Activated B cell treated with CpG ODN at 0.5 μM for 24 hours (primary cell): ENCODE measurements at regions of chr2 and their contacts with region 1.

Region 1: GRCh38 chr2:190534310-190535120 is at the start of gene NEMP2:
- DNase-seq: peak; percentile 90
- ATAC-seq: peak; percentile 80
- H3K4me3 Mint-ChIP-seq: peak within 1 kb of the TSS; percentile 97
- H3K27ac Mint-ChIP-seq: peak within 1 kb of the TSS; percentile 100
- H3K4me1 Mint-ChIP-seq: peaks cover 56% of the 10 kb centered on the region
- H3K27me3 Mint-ChIP-seq: no peaks in the 10 kb centered on the region
- CTCF ChIP-seq: no peak
- total RNA-seq, gene NEMP2: 14.2 and 15.6 TPM in 2 replicates

Region 2: DNA sequence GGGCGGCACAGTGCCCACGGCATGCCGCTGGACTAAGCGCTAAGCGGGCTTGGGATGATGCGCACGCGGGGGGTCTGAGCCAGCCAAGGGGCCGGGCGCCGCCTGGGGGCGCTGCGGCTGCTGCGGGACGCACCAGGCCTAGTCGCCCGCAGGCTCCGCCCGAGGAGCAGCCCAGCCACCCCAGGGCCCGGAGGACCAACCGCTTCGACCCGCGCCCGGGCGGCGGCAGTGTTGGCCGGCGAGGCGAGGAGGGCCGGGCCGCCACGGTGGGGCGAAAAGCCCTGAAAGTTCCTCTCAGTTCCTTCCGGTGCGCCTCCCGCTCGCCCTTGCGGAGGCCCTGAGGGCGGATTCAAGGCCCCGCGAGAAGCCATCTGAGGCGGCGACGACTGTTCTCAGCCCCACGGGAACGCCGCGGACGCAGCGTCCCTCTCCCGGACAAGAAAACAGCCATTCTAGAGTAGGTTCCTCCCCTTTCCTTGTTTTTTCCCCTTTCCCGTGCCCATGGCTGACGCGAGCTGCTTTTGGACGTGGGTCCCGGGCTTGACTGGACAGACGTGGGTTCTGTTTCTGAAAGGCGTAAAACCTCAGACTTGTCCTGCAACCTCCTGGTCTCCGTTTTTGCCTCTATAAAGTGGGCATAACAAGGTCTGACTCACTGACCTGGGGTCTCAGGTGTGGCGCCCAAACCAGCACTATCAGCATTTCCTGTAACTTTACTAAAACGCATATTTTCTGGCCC is 860.0 kb before region 1 on chr2 and contains the start of gene ANKAR:
- CTCF ChIA-PET with region 1: no interaction called
- POLR2A ChIA-PET with region 1: no interaction called
- intact Hi-C with region 1: loop called (anchors 5 kb)
- DNase-seq: peak; percentile 89
- ATAC-seq: peak; percentile 97
- H3K4me3 Mint-ChIP-seq: peak within 1 kb of the TSS; percentile 96
- H3K27ac Mint-ChIP-seq: peak within 1 kb of the TSS; percentile 99
- H3K4me1 Mint-ChIP-seq: peaks cover 38% of the 10 kb centered on the region
- H3K27me3 Mint-ChIP-seq: no peaks in the 10 kb centered on the region
- CTCF ChIP-seq: peak; percentile 67
- total RNA-seq, gene ANKAR: 13.1 and 14.5 TPM in 2 replicates

Region 3: GRCh38 chr2:189783927-189784867 is 750.3 kb before region 1 on chr2 and contains the starts of genes ORMDL1 and PMS1:
- CTCF ChIA-PET with region 1: no interaction called
- POLR2A ChIA-PET with region 1: no interaction called
- intact Hi-C with region 1: loop called (anchors 1 kb)
- DNase-seq: peak; percentile 95
- ATAC-seq: peak; percentile 90
- H3K4me3 Mint-ChIP-seq: peak within 1 kb of the TSS; percentile 94
- H3K27ac Mint-ChIP-seq: peak within 1 kb of the TSS; percentile 96
- H3K4me1 Mint-ChIP-seq: peaks cover 45% of the 10 kb centered on the region
- H3K27me3 Mint-ChIP-seq: no peaks in the 10 kb centered on the region
- CTCF ChIP-seq: no peak
- total RNA-seq, gene ORMDL1: 80.5 and 92.6 TPM in 2 replicates
- total RNA-seq, gene PMS1: 32.7 and 39.0 TPM in 2 replicates

Region 4: DNA sequence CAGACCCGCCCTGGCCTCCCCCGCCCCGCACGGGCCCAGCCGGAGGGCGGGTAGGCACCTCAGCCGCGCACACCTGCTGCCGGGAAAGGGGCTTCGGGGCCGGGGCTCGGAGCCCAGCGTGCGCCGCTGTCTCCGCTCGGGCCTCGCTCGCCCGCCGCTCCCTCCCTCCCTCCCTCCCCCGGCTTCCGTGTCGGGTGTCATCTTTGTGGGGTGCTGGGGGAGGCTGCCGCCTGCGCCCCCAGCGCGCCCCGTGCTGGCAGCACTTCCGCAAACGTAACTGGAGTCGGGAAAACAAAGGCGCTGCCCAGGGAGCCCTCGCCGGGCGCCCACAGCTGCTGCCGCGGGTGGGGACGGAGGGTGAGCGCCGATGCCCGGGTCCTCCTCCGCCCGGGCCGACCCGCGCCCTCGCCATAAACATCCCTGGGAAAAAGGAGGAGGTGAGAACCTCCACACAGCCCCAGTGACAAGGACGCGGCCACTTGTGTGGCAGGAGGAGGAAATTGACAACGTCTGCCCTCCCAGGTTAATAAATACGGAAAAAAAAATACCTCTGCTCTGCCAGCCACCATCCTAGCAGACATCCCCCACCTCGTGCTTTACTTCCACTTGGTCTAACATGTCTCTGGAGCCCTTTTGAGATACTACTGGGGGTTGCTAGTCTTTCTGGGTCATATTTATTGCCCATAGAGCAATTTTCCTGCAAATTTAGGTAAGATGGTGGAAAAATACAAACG is 125.8 kb before region 1 on chr2:
- CTCF ChIA-PET with region 1: no interaction called
- POLR2A ChIA-PET with region 1: interaction called, 6 read pairs
- intact Hi-C with region 1: loop called (anchors 1 kb)
- DNase-seq: no peak
- ATAC-seq: peak; percentile 55
- H3K4me3 Mint-ChIP-seq: peak overlapping the region; percentile 84
- H3K27ac Mint-ChIP-seq: peak overlapping the region; percentile 86
- H3K4me1 Mint-ChIP-seq: peaks cover 26% of the 10 kb centered on the region
- H3K27me3 Mint-ChIP-seq: no peaks in the 10 kb centered on the region
- CTCF ChIP-seq: no peak

Region 5: GRCh38 chr2:190679813-190680591 is 145.5 kb after region 1 on chr2:
- CTCF ChIA-PET with region 1: interaction called, 5 read pairs
- POLR2A ChIA-PET with region 1: interaction called, 30 read pairs
- intact Hi-C with region 1: loop called (anchors 1 kb)
- DNase-seq: peak; percentile 49
- ATAC-seq: peak; percentile 76
- H3K4me3 Mint-ChIP-seq: peak overlapping the region; percentile 72
- H3K27ac Mint-ChIP-seq: peak overlapping the region; percentile 88
- H3K4me1 Mint-ChIP-seq: peaks cover 38% of the 10 kb centered on the region
- H3K27me3 Mint-ChIP-seq: no peaks in the 10 kb centered on the region
- CTCF ChIP-seq: peak; percentile 35

Region 6: DNA sequence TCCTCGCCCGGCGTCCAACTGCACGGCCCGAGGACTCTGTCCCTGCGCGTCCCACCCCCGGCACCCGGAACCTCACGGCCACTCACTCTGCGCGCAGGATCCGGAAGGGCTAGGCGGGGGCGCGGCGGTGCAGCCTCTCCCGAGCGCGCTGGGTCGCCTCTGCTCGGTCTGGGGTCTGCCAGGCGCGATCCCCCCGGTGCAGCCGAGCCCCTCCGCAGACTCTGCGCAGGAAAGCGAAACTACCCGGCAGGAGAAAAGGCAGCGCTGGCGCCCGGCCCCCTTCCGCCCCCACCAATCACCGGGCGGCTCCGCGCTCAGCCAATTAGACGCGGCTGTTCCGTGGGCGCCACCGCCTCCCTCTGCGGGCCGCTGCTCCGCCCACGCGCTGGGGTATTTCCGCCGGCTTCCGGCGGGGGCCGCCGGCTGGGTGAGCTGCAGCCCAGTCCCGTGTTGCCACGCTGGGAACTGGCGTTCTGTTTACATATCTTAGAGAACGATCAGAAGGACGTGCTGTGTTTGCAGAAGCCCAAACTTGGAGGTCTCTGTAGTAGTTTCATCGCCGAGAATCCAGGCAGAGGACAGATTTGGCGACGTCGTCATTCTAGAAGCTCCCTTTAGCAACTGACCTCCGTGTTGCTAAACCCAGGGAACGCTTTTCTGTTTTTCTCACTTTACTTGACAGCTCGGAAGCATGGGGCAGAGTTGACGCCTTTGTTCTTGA is 479.6 kb after region 1 on chr2 and contains the start of gene STAT1:
- CTCF ChIA-PET with region 1: no interaction called
- POLR2A ChIA-PET with region 1: no interaction called
- intact Hi-C with region 1: loop called (anchors 2 kb)
- DNase-seq: peak; percentile 98
- ATAC-seq: peak; percentile 91
- H3K4me3 Mint-ChIP-seq: no peak within 1 kb of the TSS
- H3K27ac Mint-ChIP-seq: no peak within 1 kb of the TSS
- H3K4me1 Mint-ChIP-seq: peaks cover 29% of the 10 kb centered on the region
- H3K27me3 Mint-ChIP-seq: no peaks in the 10 kb centered on the region
- CTCF ChIP-seq: no peak
- total RNA-seq, gene STAT1: 71.2 and 85.1 TPM in 2 replicates

Region 7: GRCh38 chr2:191382801-191383200 is 848.3 kb after region 1 on chr2:
- CTCF ChIA-PET with region 1: no interaction called
- POLR2A ChIA-PET with region 1: no interaction called
- intact Hi-C with region 1: no loop called
- DNase-seq: no peak
- ATAC-seq: no peak
- H3K4me3 Mint-ChIP-seq: no peak overlapping the region
- H3K27ac Mint-ChIP-seq: no peak overlapping the region
- H3K4me1 Mint-ChIP-seq: peaks cover 5% of the 10 kb centered on the region
- H3K27me3 Mint-ChIP-seq: no peaks in the 10 kb centered on the region
- CTCF ChIP-seq: no peak